Psoas muscle (tissue), 8 donors: ENCODE measurements at regions of chr15 and their contacts with region 1.

Region 1: GRCh38 chr15:39747326-39747725 is 35.3 kb downstream of the FSIP1 start:
- DNase-seq: no peak
- ATAC-seq: peak in 3 of 4 donors; percentile 40 to 57 (median 49)
- H3K4me3 ChIP-seq: no peak overlapping the region
- H3K27ac ChIP-seq: no peak overlapping the region
- H3K4me1 ChIP-seq: no peaks in the 10 kb centered on the region
- H3K27me3 ChIP-seq: no peaks in the 10 kb centered on the region
- CTCF ChIP-seq: no peak

Region 2: GRCh38 chr15:39699516-39700374 is 47.6 kb before region 1 on chr15:
- intact Hi-C with region 1: loop called in 1 of 2 experiments (anchors 5 kb)
- DNase-seq: no peak
- ATAC-seq: no peak
- H3K4me3 ChIP-seq: no peak overlapping the region
- H3K27ac ChIP-seq: no peak overlapping the region
- H3K4me1 ChIP-seq: no peaks in the 10 kb centered on the region
- H3K27me3 ChIP-seq: no peaks in the 10 kb centered on the region
- CTCF ChIP-seq: no peak

Region 3: DNA sequence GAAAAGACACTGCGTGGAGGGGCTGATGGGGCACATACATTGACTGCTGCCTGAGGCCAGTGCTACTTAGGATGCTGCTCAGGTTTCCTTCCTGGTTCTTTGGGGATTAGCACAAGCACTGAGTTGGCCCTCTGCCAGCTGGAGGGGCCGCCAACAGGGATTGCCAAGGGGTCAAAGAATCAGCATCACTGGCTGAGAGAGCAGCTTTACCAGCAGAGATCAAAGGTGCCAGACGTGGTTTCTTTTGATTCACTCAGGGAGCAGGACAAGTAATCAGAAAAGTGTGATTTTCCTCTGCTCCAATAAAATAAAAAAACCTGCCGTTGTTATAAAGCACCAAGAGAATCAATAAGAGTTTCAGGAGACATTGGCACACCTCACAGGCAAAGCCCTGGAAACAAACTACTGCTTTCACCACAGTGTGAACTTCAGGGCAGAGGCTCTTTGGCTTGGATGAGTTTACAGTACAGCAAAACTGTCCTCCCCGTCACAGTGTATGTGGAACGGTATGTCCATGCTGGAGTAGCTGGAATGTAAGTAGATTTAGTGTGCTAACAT is 81.1 kb after region 1 on chr15:
- intact Hi-C with region 1: no loop called
- DNase-seq: no peak
- ATAC-seq: no peak
- H3K4me3 ChIP-seq: no peak overlapping the region
- H3K27ac ChIP-seq: no peak overlapping the region
- H3K4me1 ChIP-seq: no peaks in the 10 kb centered on the region
- H3K27me3 ChIP-seq: no peaks in the 10 kb centered on the region
- CTCF ChIP-seq: no peak

Region 4: DNA sequence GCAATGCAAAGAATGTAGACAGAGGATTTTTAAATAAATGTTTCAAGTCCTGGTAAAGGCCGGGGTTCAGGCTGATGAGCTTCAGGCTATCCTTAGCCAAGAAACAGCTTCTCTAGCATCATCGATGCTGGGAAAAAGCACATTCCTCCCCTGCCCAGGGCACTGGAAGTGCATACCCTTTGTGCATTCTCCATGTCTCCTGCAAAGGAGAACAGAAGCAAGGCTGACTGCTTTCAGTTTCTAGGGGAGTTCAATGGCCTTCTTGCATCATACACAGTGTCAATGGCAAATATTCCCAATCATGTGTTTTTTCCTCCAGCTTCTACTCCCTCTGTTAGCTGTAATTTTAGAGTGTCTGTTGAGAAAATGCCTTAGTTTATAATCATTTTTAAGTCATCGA is 112.9 kb after region 1 on chr15:
- intact Hi-C with region 1: no loop called
- DNase-seq: no peak
- ATAC-seq: no peak
- H3K4me3 ChIP-seq: no peak overlapping the region
- H3K27ac ChIP-seq: no peak overlapping the region
- H3K4me1 ChIP-seq: no peaks in the 10 kb centered on the region
- H3K27me3 ChIP-seq: no peaks in the 10 kb centered on the region
- CTCF ChIP-seq: no peak